ENCODE measurements at regions of chr20 and their contacts with region 1.

Region 1: DNA sequence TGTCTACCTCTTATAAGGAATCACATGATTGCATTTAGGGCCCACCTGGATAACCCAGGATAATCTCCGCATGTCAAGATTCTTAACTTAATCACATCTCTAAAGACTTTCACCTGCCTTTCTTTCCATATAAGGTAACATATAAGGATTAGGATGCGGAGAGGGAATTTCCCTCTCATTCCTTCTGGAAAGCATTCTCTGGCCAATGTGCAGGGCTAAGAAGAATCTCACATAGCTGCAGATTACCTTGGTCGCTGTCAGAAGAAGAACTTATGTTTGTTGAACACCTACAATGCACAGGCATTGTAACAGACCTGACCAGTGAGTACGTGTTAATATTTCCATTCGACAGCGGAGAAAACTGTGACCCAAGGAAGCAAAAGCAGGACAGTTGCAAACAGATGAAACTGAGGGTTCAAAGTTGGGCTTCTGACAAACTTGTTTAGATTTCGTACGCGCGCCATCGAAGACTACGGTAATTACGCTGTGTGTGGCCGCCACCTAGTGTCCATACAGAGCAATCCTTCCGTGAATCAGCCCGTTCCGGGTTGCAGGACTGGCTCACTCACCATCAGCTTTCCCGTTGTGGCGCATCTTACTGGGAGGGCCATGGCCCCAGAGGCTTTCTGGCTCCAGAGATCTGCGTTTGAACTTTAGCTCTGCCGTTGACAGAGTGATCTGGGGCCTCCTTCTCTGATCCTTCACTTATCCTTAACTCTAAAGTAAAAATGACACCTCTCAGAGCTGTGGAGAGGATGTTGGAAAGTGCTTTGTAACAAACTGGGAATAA is 9.5 kb downstream of the C20orf202 start:
- DNase-seq: peak; percentile 77
- H3K4me3 ChIP-seq: no peak overlapping the region
- H3K27ac ChIP-seq: no peak overlapping the region
- H3K4me1 ChIP-seq: peaks cover 0 to 8% (median 7%) of the 10 kb centered on the region in 4 donors
- H3K27me3 ChIP-seq: peaks cover 0 to 12% (median 5%) of the 10 kb centered on the region in 3 donors
- CTCF ChIP-seq: peak; percentile 47 to 78 (median 66)
- EP300 ChIP-seq: no peak
- POLR2A ChIP-seq: no peak

Region 2: GRCh38 chr20:924639-925038 is 288.2 kb before region 1 on chr20:
- intact Hi-C with region 1: no loop called
- DNase-seq: no peak
- H3K4me3 ChIP-seq: no peak overlapping the region
- H3K27ac ChIP-seq: no peak overlapping the region
- H3K4me1 ChIP-seq: no peaks in the 10 kb centered on the region
- H3K27me3 ChIP-seq: peaks cover 0 to 5% (median 0%) of the 10 kb centered on the region in 3 donors
- CTCF ChIP-seq: no peak
- EP300 ChIP-seq: no peak
- POLR2A ChIP-seq: no peak

Region 3: GRCh38 chr20:956330-956951 is 256.4 kb before region 1 on chr20:
- intact Hi-C with region 1: loop called (anchors 10 kb)
- DNase-seq: peak; percentile 75
- H3K4me3 ChIP-seq: no peak overlapping the region
- H3K27ac ChIP-seq: no peak overlapping the region
- H3K4me1 ChIP-seq: no peaks in the 10 kb centered on the region
- H3K27me3 ChIP-seq: peaks cover 0 to 59% (median 25%) of the 10 kb centered on the region in 3 donors
- CTCF ChIP-seq: peak; percentile 88 to 99 (median 90)
- EP300 ChIP-seq: no peak
- POLR2A ChIP-seq: no peak